ENCODE measurements at regions of chr16 and their contacts with region 1.

Region 1: DNA sequence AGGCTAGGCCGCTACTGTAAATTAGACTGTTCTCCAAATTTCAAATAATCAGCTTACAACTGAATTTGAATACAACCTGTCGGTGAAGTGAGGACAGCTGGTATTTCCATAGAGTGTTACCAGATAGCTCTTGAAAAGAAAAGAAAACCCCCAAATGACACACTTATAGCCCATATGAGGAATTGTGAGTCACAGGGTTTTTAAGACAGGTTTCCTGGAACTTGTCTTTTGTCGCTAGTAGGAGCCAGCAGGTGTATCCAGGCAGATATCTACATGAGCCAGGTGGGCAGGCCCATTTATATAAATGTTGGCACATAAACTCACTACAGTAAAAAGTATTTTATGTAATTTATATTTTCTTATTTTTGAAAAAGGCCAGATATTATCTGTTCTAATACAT is 24.0 kb downstream of the TNRC6A start:
- DNase-seq: peak; percentile 65
- H3K4me3 Mint-ChIP-seq: peak overlapping the region; percentile 1
- H3K27ac Mint-ChIP-seq: peak overlapping the region; percentile 87
- H3K4me1 Mint-ChIP-seq: peaks cover 66% of the 10 kb centered on the region
- H3K27me3 Mint-ChIP-seq: no peaks in the 10 kb centered on the region

Region 2: GRCh38 chr16:24685539-24686432 is 67.7 kb before region 1 on chr16:
- CTCF ChIA-PET with region 1: no interaction called
- intact Hi-C with region 1: no loop called
- DNase-seq: peak; percentile 30
- H3K4me3 Mint-ChIP-seq: no peak overlapping the region
- H3K27ac Mint-ChIP-seq: no peak overlapping the region
- H3K4me1 Mint-ChIP-seq: peaks cover 4% of the 10 kb centered on the region
- H3K27me3 Mint-ChIP-seq: peaks cover 15% of the 10 kb centered on the region

Region 3: GRCh38 chr16:24721830-24722238 is 31.6 kb before region 1 on chr16:
- CTCF ChIA-PET with region 1: interaction called, 3 read pairs
- intact Hi-C with region 1: loop called (anchors 1 kb)
- DNase-seq: peak; percentile 78
- H3K4me3 Mint-ChIP-seq: no peak overlapping the region
- H3K27ac Mint-ChIP-seq: peak overlapping the region; percentile 65
- H3K4me1 Mint-ChIP-seq: peaks cover 32% of the 10 kb centered on the region
- H3K27me3 Mint-ChIP-seq: peaks cover 7% of the 10 kb centered on the region

Region 4: GRCh38 chr16:24729362-24729984 is 24.0 kb before region 1 on chr16 and contains the start of gene TNRC6A:
- CTCF ChIA-PET with region 1: interaction called, 7 read pairs
- intact Hi-C with region 1: loop called (anchors 1 kb)
- DNase-seq: peak; percentile 77
- H3K4me3 Mint-ChIP-seq: peak within 1 kb of the TSS; percentile 96
- H3K27ac Mint-ChIP-seq: peak within 1 kb of the TSS; percentile 96
- H3K4me1 Mint-ChIP-seq: peaks cover 48% of the 10 kb centered on the region
- H3K27me3 Mint-ChIP-seq: no peaks in the 10 kb centered on the region
- total RNA-seq, gene TNRC6A: 37.2 to 39.0 TPM

Region 5: DNA sequence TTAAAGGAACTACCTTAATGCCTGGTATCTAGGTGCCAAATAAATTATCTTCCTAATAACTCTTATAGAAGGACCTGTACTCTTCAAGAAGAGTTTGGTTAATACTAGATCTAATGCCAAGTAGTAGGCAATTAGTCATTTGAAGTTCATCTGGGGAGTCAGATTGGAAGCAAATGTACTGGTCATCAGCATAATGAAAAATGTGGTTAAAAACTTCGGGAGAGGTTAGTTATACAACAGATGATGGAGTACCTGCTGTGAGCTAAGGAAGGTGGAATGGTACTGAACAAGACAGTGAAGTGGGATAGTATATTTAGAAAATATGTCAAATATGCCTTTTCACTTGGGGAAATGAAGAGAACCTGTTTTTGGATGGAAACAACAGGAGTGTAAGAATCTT is 25.2 kb after region 1 on chr16:
- CTCF ChIA-PET with region 1: no interaction called
- intact Hi-C with region 1: no loop called
- DNase-seq: no peak
- H3K4me3 Mint-ChIP-seq: no peak overlapping the region
- H3K27ac Mint-ChIP-seq: peak overlapping the region; percentile 6
- H3K4me1 Mint-ChIP-seq: peaks cover 9% of the 10 kb centered on the region
- H3K27me3 Mint-ChIP-seq: no peaks in the 10 kb centered on the region

Region 6: DNA sequence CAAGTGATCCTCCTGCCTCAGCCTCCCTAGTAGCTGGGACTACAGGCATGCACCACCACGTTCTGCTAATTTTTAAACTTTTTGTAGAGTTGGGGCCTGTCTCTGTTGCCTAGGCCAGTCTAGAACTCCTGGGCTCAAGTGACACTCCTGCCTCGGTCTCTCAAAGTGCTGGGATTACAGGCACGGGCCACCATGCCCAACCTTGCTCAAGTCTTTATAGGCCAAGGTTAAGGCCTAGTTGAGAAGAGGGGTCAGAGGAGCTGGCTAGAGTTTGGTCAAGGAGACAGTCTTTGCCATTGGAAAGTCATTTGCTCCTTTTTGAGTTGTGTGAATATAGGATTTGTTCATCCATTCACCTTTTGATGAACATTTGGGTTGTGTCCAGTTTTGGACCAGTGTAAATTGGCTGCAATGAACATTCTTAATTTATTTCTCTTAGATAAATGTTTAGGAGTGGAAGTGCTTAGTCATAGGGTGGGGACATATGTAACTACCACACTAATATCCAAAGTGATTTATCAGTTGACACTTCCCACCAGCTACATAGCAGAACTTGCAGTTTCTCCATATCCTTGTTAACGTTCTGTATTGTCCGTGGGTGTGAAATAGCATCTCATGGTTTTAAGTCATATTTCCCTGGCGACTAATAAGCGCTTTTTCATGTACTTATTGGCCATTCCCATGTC is 292.4 kb after region 1 on chr16:
- CTCF ChIA-PET with region 1: no interaction called
- intact Hi-C with region 1: loop called (anchors 5 kb)
- DNase-seq: no peak
- H3K4me3 Mint-ChIP-seq: no peak overlapping the region
- H3K27ac Mint-ChIP-seq: peak overlapping the region; percentile 8
- H3K4me1 Mint-ChIP-seq: peaks cover 55% of the 10 kb centered on the region
- H3K27me3 Mint-ChIP-seq: no peaks in the 10 kb centered on the region